ENCODE measurements at regions of chr3 and their contacts with region 1.

Region 1: DNA sequence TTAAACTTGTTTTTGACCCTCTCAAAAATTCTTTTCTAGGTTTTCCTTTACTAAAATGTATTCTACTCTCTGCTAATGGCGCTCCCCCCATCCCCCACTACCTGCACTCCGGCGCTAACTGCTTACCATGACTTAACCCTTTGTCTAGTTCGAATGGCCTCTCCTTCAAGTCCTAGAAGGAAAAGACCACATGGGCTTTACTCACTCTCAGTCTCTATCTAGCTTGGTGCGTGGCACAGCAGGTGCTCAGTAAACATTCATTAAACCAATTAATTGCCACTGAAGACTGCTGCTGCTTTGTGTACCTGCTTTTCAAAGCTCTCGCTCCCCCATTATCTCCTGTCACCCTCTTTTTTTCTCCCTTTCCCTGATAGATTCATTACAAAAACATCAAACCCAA is 457.7 kb upstream of the THRB start:
- DNase-seq: no peak
- H3K4me3 Mint-ChIP-seq: no peak overlapping the region
- H3K27ac Mint-ChIP-seq: no peak overlapping the region
- H3K4me1 Mint-ChIP-seq: peaks cover 11% of the 10 kb centered on the region
- H3K27me3 Mint-ChIP-seq: peaks cover 18% of the 10 kb centered on the region
- CTCF ChIP-seq: no peak

Region 2: DNA sequence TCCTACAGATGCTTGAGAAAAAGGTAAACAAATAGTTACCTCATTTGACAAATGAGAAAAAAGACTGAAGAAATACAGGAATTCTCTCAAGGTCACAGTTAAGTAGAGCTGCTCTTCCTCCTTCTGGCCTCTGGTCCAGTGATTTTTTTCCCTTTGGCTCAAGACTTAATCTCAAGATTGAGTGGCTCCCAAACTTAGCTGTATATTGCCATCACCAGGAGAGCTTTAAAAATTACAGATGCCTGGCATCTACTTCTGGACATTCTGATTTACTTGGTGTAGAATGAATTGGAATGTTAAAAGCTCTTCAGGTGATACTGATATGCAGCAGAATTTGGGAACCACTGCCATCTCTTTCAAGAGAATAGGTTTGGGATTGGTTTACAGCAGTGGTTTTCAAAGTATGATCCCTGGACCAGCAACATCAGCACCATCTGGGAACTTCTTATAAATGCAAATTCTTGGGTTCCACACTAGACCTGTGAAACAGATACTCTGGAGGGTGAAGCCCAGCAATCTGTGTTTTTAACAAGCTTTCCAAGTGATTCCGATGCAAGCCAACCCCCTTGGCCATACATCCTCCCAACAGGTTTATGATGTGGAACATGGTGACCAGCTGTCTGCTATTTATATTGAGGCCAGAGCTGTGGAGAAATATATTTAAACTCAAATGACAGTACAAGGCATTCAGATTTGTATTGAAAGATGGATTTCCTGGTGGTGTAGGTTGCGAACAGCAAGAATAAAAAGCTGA is 142.7 kb after region 1 on chr3:
- CTCF ChIA-PET with region 1: no interaction called
- POLR2A ChIA-PET with region 1: no interaction called
- intact Hi-C with region 1: loop called (anchors 10 kb)
- DNase-seq: no peak
- H3K4me3 Mint-ChIP-seq: no peak overlapping the region
- H3K27ac Mint-ChIP-seq: no peak overlapping the region
- H3K4me1 Mint-ChIP-seq: no peaks in the 10 kb centered on the region
- H3K27me3 Mint-ChIP-seq: peaks cover 41% of the 10 kb centered on the region
- CTCF ChIP-seq: no peak

Region 3: GRCh38 chr3:25171118-25171807 is 218.9 kb after region 1 on chr3:
- CTCF ChIA-PET with region 1: no interaction called
- POLR2A ChIA-PET with region 1: no interaction called
- intact Hi-C with region 1: no loop called
- DNase-seq: no peak
- H3K4me3 Mint-ChIP-seq: no peak overlapping the region
- H3K27ac Mint-ChIP-seq: no peak overlapping the region
- H3K4me1 Mint-ChIP-seq: no peaks in the 10 kb centered on the region
- H3K27me3 Mint-ChIP-seq: peaks cover 15% of the 10 kb centered on the region
- CTCF ChIP-seq: no peak

Measured in MCF 10A (cell line).